Activated T-helper 2 cell treated with anti-CD3 and anti-CD28 coated beads, Interferon-gamma antibody, Interleukin-2, Interleukin-4, amounts not matched to agents 10 μg/mL and 5 μg/mL and 100 μg/mL, durations not matched to agents 14 hours and 24 hours and 36 hours (primary cell): ENCODE measurements at regions of chr1 and their contacts with region 1.

Region 1: DNA sequence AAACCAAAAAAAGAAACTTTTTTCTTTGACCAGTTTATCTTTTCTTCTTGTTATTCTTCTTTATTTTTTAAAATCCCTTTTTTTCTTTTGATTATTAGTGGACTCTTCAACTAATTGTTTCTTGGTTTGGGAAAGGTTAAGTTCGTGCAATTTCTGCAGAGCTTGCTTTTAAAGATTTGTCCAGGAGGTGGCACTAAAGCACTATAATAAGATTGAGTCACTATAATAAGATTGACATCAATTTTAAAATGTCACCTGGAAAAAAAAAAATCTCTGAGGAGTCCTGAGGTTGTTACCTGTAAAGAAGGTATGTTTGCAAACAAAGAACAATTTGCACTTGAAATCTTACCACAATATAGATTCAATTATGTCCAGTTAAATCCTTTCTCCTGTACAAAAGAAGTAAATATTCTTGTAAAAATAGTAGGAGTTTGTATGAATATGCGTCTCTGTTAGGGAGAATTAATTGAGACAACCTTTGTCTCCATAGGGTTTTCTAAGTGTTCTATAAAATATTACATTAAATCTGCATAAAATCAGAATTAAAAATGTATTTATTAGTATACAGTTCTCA is 166.7 kb downstream of the ADGRL4 start:
- DNase-seq: no peak
- H3K4me3 Mint-ChIP-seq: no peak overlapping the region
- H3K27ac Mint-ChIP-seq: no peak overlapping the region
- H3K4me1 Mint-ChIP-seq: peaks cover 10% of the 10 kb centered on the region
- H3K27me3 Mint-ChIP-seq: peaks cover 2% of the 10 kb centered on the region

Region 2: DNA sequence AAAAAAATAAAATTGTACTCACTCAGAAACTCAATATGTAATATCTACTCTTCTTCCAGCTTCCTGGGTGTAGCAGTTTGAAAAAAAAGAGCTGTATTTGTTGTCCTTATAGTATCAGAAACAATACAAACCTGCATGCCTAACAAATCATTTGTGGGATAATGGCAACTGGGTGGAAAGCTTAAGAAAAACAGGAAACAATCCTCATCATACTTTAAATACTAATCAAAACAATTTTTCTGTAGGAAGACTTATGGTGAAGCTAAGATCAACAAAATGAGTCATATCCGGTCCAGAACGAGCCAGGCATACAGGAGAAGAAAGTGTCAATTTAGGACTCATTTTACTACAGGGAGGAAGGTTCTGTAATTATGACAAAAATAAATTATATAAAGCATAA is 348.5 kb after region 1 on chr1:
- intact Hi-C with region 1: loop called (anchors 10 kb)
- DNase-seq: no peak
- H3K4me3 Mint-ChIP-seq: no peak overlapping the region
- H3K27ac Mint-ChIP-seq: no peak overlapping the region
- H3K4me1 Mint-ChIP-seq: no peaks in the 10 kb centered on the region
- H3K27me3 Mint-ChIP-seq: no peaks in the 10 kb centered on the region